MCF 10A (cell line): ENCODE measurements at regions of chr2 and their contacts with region 1.

Region 1: DNA sequence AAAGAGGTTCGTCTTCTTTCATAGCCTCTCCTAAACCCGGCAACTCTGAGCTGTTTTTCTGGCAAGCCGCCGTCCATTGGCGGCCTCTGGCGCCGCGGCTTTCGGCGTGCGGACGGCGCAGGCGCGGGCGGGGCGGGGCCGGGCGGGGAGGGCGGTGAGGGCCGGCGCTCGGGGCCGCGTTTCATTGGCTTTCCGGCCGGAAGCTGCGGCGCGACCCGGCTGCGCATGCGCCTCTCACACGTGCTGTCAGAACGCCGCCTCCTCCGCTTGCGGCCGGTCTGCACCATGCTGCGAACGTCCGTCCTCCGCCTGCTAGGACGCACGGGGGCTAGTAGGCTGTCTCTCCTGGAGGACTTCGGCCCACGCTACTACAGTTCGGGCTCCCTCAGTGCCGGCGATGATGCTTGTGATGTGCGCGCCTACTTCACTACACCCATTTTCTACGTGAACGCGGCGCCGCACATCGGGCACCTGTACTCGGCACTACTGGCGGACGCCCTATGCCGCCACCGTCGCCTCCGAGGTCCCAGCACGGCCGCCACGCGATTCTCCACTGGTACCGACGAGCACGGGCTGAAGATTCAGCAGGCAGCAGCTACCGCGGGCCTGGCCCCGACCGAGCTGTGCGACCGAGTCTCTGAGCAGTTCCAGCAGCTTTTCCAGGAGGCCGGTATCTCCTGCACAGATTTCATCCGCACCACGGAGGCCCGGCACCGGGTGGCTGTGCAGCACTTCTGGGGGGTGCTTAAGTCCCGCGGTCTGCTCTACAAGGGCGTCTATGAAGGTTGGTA is at the start of gene MARS2:
- DNase-seq: peak; percentile 92
- H3K4me3 Mint-ChIP-seq: peak within 1 kb of the TSS; percentile 92
- H3K27ac Mint-ChIP-seq: peak within 1 kb of the TSS; percentile 57
- H3K4me1 Mint-ChIP-seq: peaks cover 26% of the 10 kb centered on the region
- H3K27me3 Mint-ChIP-seq: no peaks in the 10 kb centered on the region
- CTCF ChIP-seq: no peak
- total RNA-seq, gene MARS2: 9.5 and 15.3 TPM in 2 replicates

Region 2: GRCh38 chr2:197434541-197435513 is 270.5 kb before region 1 on chr2 and contains the start of gene SF3B1:
- CTCF ChIA-PET with region 1: interaction called, 4 read pairs
- POLR2A ChIA-PET with region 1: interaction called, 12 read pairs
- intact Hi-C with region 1: loop called (anchors 5 kb)
- DNase-seq: peak; percentile 98
- H3K4me3 Mint-ChIP-seq: peak within 1 kb of the TSS; percentile 70
- H3K27ac Mint-ChIP-seq: peak within 1 kb of the TSS; percentile 100
- H3K4me1 Mint-ChIP-seq: peaks cover 15% of the 10 kb centered on the region
- H3K27me3 Mint-ChIP-seq: no peaks in the 10 kb centered on the region
- CTCF ChIP-seq: no peak
- total RNA-seq, gene SF3B1: 179 and 182 TPM in 2 replicates

Region 3: DNA sequence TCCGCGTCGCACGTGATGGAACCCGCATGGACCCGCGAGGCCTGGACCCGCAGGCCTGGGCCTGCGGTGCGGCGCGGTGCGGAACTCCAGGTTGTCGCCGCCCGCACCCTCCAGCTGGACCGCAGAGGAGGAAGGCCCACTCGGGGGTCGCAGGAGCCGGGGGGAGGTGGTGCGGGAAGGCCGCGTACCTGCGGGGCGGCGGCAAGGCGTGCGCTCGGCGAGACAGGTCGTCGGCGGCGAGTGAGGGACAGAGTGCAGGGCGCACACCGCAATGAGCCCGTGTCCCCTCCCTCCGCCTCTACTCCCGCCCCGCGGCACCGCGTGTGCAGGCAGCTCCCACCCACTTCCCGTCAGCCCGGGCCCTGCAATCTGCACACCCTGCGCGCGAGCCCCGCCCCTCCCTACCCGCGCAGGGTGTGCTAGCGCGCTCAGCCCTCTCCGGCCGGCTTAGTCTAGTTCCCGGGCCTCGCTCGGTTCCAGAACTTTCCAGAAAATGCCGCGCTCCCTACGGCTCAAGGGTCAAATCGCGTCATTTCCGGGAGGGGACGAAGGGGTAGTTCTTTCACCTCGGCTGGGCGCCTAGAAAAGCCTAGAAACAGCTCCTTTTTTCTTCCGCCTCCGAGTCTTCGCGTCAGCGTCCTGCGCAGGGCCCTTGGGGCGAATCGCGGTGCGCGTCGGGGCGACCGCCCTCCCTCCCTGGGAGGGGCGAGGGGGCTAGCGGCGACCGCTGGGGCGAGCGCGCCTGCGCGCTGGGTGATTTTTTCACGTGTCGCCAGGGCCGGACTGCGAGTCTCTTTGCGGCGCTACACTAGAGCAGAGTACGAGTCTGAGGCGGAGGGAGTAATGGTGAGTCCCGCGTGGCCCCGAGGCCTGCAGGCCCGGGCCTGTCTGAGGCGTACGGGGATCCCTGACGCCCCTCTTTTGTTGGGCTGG is 205.5 kb before region 1 on chr2 and contains the starts of genes HSPD1 and HSPE1:
- CTCF ChIA-PET with region 1: no interaction called
- POLR2A ChIA-PET with region 1: interaction called, 49 read pairs
- intact Hi-C with region 1: loop called (anchors 1 kb)
- DNase-seq: peak; percentile 100
- H3K4me3 Mint-ChIP-seq: peak within 1 kb of the TSS; percentile 89
- H3K27ac Mint-ChIP-seq: peak within 1 kb of the TSS; percentile 93
- H3K4me1 Mint-ChIP-seq: peaks cover 18% of the 10 kb centered on the region
- H3K27me3 Mint-ChIP-seq: no peaks in the 10 kb centered on the region
- CTCF ChIP-seq: no peak
- total RNA-seq, gene HSPD1: 681 and 693 TPM in 2 replicates
- total RNA-seq, gene HSPE1: 80.0 and 95.2 TPM in 2 replicates

Region 4: DNA sequence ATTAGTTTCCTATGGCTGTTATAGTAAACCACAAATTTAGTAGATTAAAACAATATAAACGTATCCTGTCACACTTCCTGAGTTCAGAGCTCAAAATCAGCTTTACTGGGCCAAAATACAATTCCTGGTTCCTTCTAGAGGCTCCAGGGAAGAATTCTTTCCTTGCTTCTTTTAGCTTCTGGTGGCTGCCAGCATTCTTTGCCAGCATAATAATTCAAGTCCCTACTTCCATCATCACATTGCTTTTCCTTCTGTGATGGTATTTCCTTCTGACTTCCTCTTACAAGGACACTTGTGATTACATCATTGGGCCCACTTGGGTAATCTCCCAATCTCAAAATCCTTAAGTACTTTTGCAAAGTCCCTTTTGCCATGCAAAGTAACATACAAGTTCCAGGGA is 148.9 kb before region 1 on chr2:
- CTCF ChIA-PET with region 1: no interaction called
- POLR2A ChIA-PET with region 1: no interaction called
- intact Hi-C with region 1: loop called (anchors 10 kb)
- DNase-seq: no peak
- H3K4me3 Mint-ChIP-seq: no peak overlapping the region
- H3K27ac Mint-ChIP-seq: peak overlapping the region; percentile 17
- H3K4me1 Mint-ChIP-seq: no peaks in the 10 kb centered on the region
- H3K27me3 Mint-ChIP-seq: no peaks in the 10 kb centered on the region
- CTCF ChIP-seq: no peak

Region 5: DNA sequence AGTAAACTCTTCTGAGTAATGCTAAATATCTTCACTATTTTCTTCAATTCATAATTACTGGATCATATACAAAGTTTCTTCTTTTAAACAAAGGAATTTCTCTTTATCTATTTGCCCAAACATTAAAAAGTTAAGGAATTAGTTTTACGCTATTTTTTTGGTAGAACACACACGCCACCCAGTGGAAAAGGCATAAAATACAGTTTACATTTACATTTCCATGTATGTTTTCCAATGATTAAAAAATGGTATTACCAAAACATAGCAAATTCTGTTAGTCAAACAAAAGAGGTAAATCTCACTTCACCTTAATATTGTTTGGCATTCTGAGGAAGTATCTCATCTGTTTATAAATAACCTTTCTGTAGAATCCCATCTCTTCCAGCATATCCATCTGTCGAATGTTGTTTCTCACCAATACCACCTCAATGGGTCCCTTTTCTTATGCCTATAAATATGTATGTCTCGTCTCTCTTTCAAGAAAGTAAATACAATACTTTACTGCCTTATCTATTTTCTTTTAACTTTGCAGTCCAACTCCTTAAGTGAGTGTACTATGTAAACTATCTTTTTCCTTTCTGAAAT is 72.6 kb after region 1 on chr2:
- CTCF ChIA-PET with region 1: interaction called, 27 read pairs
- POLR2A ChIA-PET with region 1: interaction called, 12 read pairs
- intact Hi-C with region 1: loop called (anchors 1 kb)
- DNase-seq: peak; percentile 65
- H3K4me3 Mint-ChIP-seq: no peak overlapping the region
- H3K27ac Mint-ChIP-seq: no peak overlapping the region
- H3K4me1 Mint-ChIP-seq: peaks cover 6% of the 10 kb centered on the region
- H3K27me3 Mint-ChIP-seq: peaks cover 11% of the 10 kb centered on the region
- CTCF ChIP-seq: peak; percentile 64

Region 6: DNA sequence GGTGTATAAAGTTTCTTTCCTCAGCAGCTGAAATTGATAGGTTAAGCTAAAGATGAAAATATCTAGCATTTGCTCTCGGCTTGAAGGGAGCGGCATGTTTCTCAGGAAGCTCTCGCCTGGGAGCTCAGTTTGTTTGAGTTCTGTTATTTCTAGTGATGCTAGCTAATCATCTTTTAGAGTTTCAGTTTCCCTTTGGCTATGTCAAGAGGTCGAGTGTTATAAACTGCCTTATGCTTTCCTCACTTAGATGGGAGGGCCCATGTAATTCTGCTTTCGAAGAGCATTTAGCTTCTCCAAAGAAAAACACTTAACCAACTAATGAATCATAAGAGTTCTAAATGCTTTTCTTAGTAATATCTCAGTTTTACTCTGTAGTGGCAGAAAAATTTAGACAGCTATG is 132.7 kb after region 1 on chr2:
- CTCF ChIA-PET with region 1: no interaction called
- POLR2A ChIA-PET with region 1: no interaction called
- intact Hi-C with region 1: no loop called
- DNase-seq: no peak
- H3K4me3 Mint-ChIP-seq: no peak overlapping the region
- H3K27ac Mint-ChIP-seq: no peak overlapping the region
- H3K4me1 Mint-ChIP-seq: no peaks in the 10 kb centered on the region
- H3K27me3 Mint-ChIP-seq: no peaks in the 10 kb centered on the region
- CTCF ChIP-seq: no peak

Region 7: GRCh38 chr2:197952540-197953202 is 247.4 kb after region 1 on chr2:
- CTCF ChIA-PET with region 1: no interaction called
- POLR2A ChIA-PET with region 1: no interaction called
- intact Hi-C with region 1: no loop called
- DNase-seq: no peak
- H3K4me3 Mint-ChIP-seq: no peak overlapping the region
- H3K27ac Mint-ChIP-seq: no peak overlapping the region
- H3K4me1 Mint-ChIP-seq: peaks cover 22% of the 10 kb centered on the region
- H3K27me3 Mint-ChIP-seq: peaks cover 7% of the 10 kb centered on the region
- CTCF ChIP-seq: no peak

Region 8: DNA sequence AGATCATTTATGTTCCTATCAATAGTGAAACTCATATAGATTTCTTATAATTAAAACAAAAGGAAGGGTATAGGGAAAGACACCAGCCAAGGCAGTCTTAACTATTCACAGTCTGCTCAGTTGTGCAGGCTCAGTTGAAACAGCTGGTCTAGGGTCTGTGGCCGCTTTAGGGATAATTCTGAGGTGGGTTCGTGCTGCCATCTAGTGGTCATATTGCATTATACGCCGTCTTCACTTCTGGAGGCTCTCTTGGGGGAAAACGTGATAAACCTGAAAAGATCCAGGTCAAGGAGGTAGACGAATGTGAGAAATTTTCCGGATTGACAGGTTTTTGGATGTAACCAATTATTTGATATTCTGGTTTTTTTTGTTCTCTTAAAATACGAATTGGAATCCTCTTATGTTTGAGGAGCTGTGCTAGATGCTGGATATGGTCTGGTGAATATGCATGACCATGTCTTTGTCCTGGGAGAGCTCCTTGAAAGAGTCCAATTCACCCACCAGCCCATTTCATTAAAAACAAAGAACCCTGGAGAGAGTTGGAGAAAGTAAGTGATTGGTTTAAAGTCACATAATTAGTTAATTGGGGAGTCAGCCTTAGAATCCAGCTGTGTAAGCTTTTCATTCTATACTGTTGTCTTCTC is 591.5 kb after region 1 on chr2:
- CTCF ChIA-PET with region 1: interaction called, 9 read pairs
- POLR2A ChIA-PET with region 1: no interaction called
- intact Hi-C with region 1: loop called (anchors 5 kb)
- DNase-seq: peak; percentile 71
- H3K4me3 Mint-ChIP-seq: no peak overlapping the region
- H3K27ac Mint-ChIP-seq: no peak overlapping the region
- H3K4me1 Mint-ChIP-seq: no peaks in the 10 kb centered on the region
- H3K27me3 Mint-ChIP-seq: peaks cover 32% of the 10 kb centered on the region
- CTCF ChIP-seq: peak; percentile 77

Region 9: GRCh38 chr2:198692907-198693510 is 987.7 kb after region 1 on chr2:
- CTCF ChIA-PET with region 1: no interaction called
- POLR2A ChIA-PET with region 1: no interaction called
- intact Hi-C with region 1: no loop called
- DNase-seq: no peak
- H3K4me3 Mint-ChIP-seq: no peak overlapping the region
- H3K27ac Mint-ChIP-seq: no peak overlapping the region
- H3K4me1 Mint-ChIP-seq: no peaks in the 10 kb centered on the region
- H3K27me3 Mint-ChIP-seq: peaks cover 41% of the 10 kb centered on the region
- CTCF ChIP-seq: no peak